HEK293 (cell line): ENCODE measurements at regions of chr17 and their contacts with region 1.

Region 1: DNA sequence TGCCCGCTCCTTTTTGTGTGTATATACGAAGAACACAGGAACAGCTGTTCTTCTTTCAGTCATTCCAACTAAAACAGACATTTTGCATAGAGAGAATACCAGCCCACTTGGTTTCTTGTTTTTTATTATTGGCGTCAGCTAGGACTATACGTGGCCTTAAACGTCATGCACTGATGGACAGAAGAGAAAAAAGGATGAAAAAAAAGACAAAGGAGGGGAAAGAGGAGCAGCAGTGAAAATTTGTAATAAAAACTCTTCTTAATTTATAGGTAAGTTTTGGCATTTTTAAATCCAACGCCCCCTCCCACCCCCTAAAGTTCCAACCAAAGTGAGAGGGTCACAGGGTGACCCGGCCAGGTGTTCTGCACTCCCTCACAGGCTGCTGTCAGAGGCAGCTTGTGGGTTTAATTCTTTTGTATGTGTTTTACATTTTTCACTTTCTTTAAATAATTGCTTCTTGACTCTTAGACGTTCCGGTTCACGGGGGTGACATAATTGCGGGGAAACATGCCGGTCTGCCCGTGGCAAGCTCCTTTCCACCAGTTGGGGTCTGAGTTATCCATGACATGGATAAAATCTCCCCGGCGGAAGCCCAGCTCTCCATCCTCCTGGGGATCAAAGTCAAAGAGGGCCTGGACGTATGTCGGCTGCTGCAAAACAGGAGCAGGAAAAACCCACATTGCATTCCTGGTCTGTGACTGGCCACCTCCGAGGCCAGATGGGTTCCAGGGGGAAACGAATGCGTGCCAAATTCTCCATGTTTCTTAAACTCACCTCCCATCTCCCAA is 30.9 kb upstream of the SLC25A19 start:
- H3K4me3 ChIP-seq: no peak overlapping the region
- H3K27ac ChIP-seq: no peak overlapping the region
- H3K4me1 ChIP-seq: peaks cover 5% of the 10 kb centered on the region
- CTCF ChIP-seq: no peak

Region 2: GRCh38 chr17:74446551-74447500 is 873.3 kb before region 1 on chr17:
- CTCF ChIA-PET with region 1: no interaction called
- POLR2A ChIA-PET with region 1: no interaction called
- H3K4me3 ChIP-seq: no peak overlapping the region
- H3K27ac ChIP-seq: no peak overlapping the region
- H3K4me1 ChIP-seq: peaks cover 5% of the 10 kb centered on the region; the same call in 1 of the 2 replicates
- CTCF ChIP-seq: no peak

Region 3: DNA sequence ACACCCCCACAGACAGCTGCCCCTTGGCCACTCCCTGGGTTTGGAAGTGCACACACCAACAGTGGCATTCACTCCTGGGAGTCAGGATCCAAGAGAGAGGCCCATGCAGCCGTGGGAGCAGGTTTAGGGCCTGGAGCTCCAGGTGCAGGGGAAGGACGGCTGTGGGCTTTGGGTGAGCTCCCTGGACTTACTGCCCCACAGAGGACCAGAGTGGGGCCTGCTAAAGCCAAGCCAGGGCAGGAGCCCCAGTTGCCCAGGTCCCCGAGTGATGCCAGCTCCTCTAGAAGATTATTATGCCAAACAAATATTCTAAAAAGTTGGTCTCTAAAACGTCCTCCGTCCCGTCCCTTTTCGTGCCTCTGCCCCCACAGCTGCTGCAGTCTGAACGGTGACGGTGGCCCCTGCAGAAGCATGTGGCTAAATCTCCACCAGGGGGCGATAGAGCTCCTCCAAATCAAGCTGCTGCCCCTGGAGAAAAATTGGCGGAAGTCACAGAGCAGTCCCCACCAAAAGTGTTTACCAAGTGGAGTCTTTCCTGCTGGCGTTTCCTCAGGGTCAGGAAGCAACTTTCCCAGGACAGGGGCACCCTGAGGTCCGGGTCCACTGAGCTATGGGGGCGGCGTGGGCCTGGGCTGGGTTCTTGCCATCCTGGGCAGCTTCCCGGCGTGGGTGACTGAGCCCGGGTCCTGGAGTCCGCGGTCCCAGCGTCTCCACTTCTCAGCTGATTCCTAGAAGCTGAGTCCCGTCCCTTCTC is 206.1 kb before region 1 on chr17:
- CTCF ChIA-PET with region 1: no interaction called
- POLR2A ChIA-PET with region 1: no interaction called
- H3K4me3 ChIP-seq: peak overlapping the region; percentile 36
- H3K27ac ChIP-seq: peak overlapping the region; percentile 25; the same call in 1 of the 2 replicates
- H3K4me1 ChIP-seq: peaks cover 9% of the 10 kb centered on the region
- CTCF ChIP-seq: peak; percentile 79

Region 4: DNA sequence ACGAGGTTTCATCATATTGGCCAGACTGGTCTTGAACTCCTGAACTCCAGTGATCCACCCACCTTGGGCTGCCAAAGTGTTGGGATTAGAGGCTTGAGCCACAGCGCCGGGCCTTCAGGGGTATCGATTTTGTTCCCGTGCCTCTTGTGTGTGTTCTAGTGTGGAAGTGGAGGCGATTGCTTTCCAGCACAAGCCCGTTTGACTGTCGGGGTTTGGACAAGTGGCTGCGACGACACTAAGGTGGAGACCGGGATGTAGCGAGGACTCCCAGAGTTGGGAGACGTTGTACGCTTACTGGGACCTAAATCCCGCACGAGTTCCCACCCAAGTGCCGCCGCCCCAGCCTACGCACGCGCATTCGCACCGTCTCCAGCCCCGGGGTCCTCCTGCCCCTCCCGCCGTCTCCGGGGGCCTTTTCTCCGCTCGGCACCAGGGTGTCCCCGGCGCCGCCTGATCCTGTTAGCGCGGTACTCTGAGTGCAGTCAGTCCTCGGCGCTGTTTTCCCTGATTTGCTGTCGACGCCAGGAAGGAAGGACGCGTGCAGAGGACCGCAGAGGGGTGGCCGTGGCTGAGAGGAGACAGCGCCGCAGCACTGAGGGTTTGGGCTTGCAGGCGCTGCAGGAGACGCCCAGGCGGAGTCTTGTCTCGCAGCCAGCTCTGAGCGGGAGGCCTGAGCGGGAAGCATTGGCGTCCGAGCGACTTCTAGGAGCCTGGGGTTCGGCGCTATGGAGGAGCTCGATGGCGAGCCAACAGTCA is 114.9 kb before region 1 on chr17 and contains the start of gene NUP85:
- CTCF ChIA-PET with region 1: no interaction called
- POLR2A ChIA-PET with region 1: no interaction called
- H3K4me3 ChIP-seq: peak within 1 kb of the TSS; percentile 98
- H3K27ac ChIP-seq: peak within 1 kb of the TSS; percentile 99
- H3K4me1 ChIP-seq: no peaks in the 10 kb centered on the region
- CTCF ChIP-seq: peak; percentile 96

Region 5: GRCh38 chr17:75271233-75271954 is 48.7 kb before region 1 on chr17:
- CTCF ChIA-PET with region 1: interaction called, 22 read pairs
- POLR2A ChIA-PET with region 1: no interaction called
- H3K4me3 ChIP-seq: peak overlapping the region; percentile 78
- H3K27ac ChIP-seq: peak overlapping the region; percentile 94; the same call in 1 of the 2 replicates
- H3K4me1 ChIP-seq: peaks cover 9% of the 10 kb centered on the region; the same call in 1 of the 2 replicates
- CTCF ChIP-seq: peak; percentile 69

Region 6: GRCh38 chr17:75335315-75335714 is 15.2 kb after region 1 on chr17:
- CTCF ChIA-PET with region 1: interaction called, 24 read pairs
- POLR2A ChIA-PET with region 1: interaction called, 5 read pairs
- H3K4me3 ChIP-seq: no peak overlapping the region
- H3K27ac ChIP-seq: no peak overlapping the region
- H3K4me1 ChIP-seq: peaks cover 7% of the 10 kb centered on the region
- CTCF ChIP-seq: no peak

Region 7: DNA sequence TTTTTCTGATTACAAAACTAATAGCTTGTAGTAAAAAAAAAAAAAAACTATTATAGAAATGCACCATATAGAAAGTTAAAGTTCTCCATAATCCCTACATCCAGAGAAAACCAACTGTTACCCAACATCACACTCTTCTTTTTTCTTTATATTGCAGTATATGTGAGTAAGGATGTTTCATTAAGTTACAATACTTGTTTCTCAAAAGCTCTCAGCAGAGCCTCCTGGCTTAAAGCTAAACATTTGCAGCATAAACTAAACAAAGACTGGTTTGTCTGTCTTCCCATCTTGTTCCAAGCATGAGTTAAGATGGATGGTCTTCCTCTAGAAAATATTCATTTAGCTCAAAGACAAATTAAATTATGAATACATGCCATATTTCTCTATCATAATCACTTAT is 60.2 kb after region 1 on chr17:
- CTCF ChIA-PET with region 1: interaction called, 26 read pairs
- POLR2A ChIA-PET with region 1: no interaction called
- H3K4me3 ChIP-seq: no peak overlapping the region
- H3K27ac ChIP-seq: no peak overlapping the region
- H3K4me1 ChIP-seq: peaks cover 7% of the 10 kb centered on the region
- CTCF ChIP-seq: no peak

Region 8: DNA sequence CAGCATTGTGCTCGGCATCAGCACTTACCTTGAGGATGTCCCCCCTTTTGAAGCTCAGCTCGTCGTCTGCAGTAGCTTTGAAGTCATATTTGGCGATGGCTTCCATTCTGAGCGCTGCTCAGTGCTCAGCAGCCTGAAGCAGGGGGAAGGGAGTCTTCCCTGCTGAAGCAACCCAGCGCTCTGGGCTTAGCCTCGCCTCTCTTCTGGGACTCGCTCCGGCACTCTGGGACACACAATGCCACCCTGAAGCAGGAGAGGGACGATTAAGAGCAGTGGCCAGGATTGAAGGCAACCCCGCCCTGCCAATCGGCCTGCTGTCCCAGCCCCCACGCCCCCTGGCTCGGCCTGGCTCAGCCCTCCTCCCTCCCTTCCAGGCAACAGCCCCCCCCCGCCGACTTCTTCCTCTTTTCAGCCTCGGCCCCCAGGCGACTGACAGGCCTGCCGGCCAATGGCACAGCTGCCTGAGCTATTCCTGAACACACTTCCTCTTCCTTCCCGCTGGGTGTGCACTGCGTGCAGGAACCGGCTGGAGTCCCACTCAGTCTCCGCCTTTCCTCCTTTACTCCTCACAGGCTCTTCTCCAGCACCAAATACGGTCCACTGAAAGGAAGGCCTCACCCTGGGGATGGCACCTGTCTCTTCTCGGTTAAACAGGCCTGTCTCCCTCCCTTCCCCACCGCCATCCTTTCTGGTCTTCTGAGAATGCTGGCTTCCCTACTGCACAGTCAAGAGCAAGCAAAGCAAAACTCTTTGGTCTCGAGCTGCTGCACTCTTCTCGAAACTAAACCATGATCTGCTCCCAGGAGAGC is 73.6 kb after region 1 on chr17:
- CTCF ChIA-PET with region 1: interaction called, 41 read pairs
- POLR2A ChIA-PET with region 1: interaction called, 20 read pairs
- H3K4me3 ChIP-seq: peak overlapping the region; percentile 61
- H3K27ac ChIP-seq: peak overlapping the region; percentile 84
- H3K4me1 ChIP-seq: peaks cover 43% of the 10 kb centered on the region
- CTCF ChIP-seq: no peak; the same call in 1 of the 2 replicates

Region 9: DNA sequence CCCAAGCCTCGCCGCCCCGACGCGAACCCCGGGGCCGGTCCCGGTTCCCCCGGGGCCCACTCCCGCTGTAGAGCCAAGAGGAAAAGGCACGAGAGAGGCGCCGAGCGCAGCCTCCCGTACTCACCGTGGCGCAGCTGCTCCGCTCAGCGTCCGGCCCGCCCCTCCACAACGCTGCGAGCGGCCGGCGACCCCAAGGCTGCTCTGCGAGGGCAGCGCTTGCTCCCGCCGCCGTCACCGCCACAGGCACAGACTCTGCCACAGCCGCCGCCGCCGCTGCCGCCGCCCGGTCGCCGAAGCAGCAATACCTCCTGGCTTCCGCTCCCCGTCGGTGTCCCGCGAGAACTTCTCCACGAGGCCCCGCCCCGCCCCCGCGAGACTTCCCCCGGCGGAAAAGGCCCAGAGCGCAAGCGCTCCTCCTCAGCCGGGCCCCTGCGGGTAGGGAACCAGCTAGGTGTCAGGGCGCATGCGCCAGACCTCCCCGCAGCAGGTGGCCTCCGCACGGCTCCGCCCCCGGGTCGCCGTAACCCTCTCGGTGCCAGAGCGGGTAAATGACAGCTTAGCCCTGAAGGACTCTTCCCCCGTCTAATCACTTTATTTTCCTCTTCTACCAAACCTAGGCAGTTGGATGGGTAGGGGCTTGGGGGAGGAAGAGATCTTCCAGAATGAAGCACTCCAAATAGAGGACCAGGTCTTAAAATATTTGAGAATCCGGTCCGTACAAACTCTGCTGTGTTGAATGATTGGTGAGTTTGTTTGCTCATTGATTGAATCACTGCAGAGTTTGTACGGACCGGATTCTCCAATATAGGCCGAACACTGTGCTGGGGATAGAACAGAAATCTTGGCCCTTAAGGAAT is 85.5 kb after region 1 on chr17 and contains the start of gene GRB2:
- CTCF ChIA-PET with region 1: interaction called, 31 read pairs
- POLR2A ChIA-PET with region 1: interaction called, 9 read pairs
- H3K4me3 ChIP-seq: peak within 1 kb of the TSS; percentile 96
- H3K27ac ChIP-seq: peak within 1 kb of the TSS; percentile 94
- H3K4me1 ChIP-seq: 0 out of 2 replicates have a peak, but pooled peaks cover 8% of the 10 kb centered on the region
- CTCF ChIP-seq: no peak